BJ (cell line): ENCODE measurements at regions of chr2 and their contacts with region 1.

Region 1: GRCh38 chr2:216519154-216519762 is 20.6 kb downstream of the RPL37A start:
- DNase-seq: no peak
- H3K4me3 ChIP-seq: no peak overlapping the region
- H3K27me3 ChIP-seq: no peaks in the 10 kb centered on the region
- CTCF ChIP-seq: peak; percentile 67

Region 2: DNA sequence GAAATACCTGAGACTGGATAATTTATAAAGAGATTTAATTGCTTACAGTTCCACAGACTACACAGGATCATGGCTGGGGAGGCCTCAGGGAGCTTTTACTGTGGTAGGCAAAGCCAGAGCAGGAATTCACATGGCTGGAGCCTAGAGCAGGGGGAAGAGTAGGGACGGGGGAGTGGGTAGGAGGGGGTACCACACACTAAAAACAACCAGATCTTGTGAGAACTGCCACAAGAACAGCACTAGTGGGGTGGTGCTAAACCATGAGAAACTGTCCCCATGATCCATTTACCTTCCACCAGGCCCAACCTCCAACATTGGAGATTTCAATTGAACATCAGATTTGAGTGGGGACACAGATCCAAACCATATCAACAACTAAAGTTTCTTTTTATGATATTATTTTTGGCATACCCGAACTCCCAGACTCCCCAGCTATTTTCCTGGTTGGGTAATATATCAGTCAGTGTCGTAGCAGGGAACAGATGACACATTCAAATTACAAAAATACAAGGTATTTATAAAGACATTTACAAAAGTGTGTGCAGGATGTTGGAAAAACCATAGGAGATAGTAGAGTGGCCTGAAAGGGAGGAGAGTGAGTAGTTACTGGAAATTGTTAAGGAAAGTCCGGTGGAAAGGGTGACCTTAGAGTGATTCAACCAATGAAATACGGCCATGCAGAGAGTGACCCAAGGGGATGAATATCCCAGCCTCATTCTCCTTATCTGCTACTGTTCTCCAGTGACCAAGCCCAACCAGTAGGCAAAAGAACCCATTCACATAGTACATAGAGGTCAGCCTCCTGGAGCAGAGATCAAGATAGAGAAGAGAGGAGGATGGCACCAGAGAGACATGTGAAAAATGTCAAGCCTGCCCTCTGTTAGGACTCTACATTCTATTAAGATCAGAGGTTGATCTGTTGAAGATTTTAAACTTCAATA is 11.8 kb before region 1 on chr2:
- CTCF ChIA-PET with region 1: interaction called, 51 read pairs
- POLR2A ChIA-PET with region 1: interaction called, 3 read pairs
- DNase-seq: no peak
- H3K4me3 ChIP-seq: no peak overlapping the region
- H3K27me3 ChIP-seq: no peaks in the 10 kb centered on the region
- CTCF ChIP-seq: no peak

Region 3: GRCh38 chr2:216533609-216534008 is 14.4 kb after region 1 on chr2:
- CTCF ChIA-PET with region 1: interaction called, 32 read pairs
- POLR2A ChIA-PET with region 1: no interaction called
- DNase-seq: no peak
- H3K4me3 ChIP-seq: no peak overlapping the region
- H3K27me3 ChIP-seq: no peaks in the 10 kb centered on the region
- CTCF ChIP-seq: no peak

Region 4: GRCh38 chr2:216583147-216583546 is 63.9 kb after region 1 on chr2:
- CTCF ChIA-PET with region 1: interaction called, 11 read pairs
- POLR2A ChIA-PET with region 1: no interaction called
- DNase-seq: peak; percentile 64
- H3K4me3 ChIP-seq: no peak overlapping the region
- H3K27me3 ChIP-seq: peaks cover 6% of the 10 kb centered on the region
- CTCF ChIP-seq: no peak

Region 5: GRCh38 chr2:216590780-216591179 is 71.5 kb after region 1 on chr2:
- CTCF ChIA-PET with region 1: interaction called, 20 read pairs
- POLR2A ChIA-PET with region 1: no interaction called
- DNase-seq: no peak
- H3K4me3 ChIP-seq: no peak overlapping the region
- H3K27me3 ChIP-seq: peaks cover 3% of the 10 kb centered on the region; the same call in 1 of the 2 replicates
- CTCF ChIP-seq: 0 out of 2 replicates have a peak, but pooled peaks have one; percentile 18

Region 6: GRCh38 chr2:216666461-216667233 is 147.4 kb after region 1 on chr2:
- CTCF ChIA-PET with region 1: interaction called, 531 read pairs
- POLR2A ChIA-PET with region 1: interaction called, 3 read pairs
- DNase-seq: no peak
- H3K4me3 ChIP-seq: no peak overlapping the region
- H3K27me3 ChIP-seq: no peaks in the 10 kb centered on the region; the same call in 1 of the 2 replicates
- CTCF ChIP-seq: peak; percentile 97

Region 7: GRCh38 chr2:216680951-216681629 is 161.8 kb after region 1 on chr2:
- CTCF ChIA-PET with region 1: interaction called, 11 read pairs
- POLR2A ChIA-PET with region 1: no interaction called
- DNase-seq: no peak
- H3K4me3 ChIP-seq: no peak overlapping the region
- H3K27me3 ChIP-seq: no peaks in the 10 kb centered on the region
- CTCF ChIP-seq: no peak